ENCODE measurements at regions of chr14 and their contacts with region 1.

Region 1: DNA sequence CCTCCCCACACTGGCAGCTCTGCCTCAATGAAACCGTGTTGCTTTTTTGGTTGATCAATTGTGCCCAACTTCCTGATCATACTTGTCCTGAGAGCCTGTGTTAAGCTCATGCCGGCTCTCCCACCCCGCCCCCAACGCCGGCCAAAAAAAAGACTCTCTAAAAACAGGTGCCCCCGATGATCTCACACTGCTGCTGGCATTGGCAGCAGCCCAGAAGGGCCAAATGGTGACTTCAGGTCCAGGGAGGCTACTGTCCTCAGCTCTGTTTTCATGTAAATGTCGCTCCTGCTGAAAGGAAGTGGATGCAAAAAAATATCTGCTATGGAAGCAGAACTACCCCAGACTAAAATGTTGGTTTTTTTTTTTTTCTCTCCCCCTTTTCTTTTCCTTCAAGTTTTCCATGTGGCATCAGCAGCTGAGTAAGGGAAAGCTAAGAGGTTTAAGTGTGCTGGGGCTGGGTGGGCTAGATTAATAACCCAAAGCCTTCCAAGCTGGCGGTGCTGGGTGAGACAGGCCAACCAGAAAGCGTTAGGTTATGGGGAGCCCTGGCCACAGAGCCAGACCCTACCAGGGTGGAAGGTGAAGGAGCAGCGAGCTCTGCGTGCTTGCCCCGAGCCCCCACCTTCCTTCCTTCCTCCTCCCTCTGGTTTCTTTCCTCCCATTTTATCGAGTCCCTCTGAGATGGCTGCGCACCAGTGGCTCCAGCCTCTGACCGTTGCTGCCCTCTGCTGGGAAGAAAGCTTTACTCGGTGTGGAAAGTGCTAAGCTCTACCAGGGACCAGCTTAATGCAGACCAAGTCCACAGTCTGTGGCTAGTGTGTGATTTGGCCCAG is 396.1 kb downstream of the NRXN3 start:
- DNase-seq: peak; percentile 69 to 95 (median 88)

Region 2: DNA sequence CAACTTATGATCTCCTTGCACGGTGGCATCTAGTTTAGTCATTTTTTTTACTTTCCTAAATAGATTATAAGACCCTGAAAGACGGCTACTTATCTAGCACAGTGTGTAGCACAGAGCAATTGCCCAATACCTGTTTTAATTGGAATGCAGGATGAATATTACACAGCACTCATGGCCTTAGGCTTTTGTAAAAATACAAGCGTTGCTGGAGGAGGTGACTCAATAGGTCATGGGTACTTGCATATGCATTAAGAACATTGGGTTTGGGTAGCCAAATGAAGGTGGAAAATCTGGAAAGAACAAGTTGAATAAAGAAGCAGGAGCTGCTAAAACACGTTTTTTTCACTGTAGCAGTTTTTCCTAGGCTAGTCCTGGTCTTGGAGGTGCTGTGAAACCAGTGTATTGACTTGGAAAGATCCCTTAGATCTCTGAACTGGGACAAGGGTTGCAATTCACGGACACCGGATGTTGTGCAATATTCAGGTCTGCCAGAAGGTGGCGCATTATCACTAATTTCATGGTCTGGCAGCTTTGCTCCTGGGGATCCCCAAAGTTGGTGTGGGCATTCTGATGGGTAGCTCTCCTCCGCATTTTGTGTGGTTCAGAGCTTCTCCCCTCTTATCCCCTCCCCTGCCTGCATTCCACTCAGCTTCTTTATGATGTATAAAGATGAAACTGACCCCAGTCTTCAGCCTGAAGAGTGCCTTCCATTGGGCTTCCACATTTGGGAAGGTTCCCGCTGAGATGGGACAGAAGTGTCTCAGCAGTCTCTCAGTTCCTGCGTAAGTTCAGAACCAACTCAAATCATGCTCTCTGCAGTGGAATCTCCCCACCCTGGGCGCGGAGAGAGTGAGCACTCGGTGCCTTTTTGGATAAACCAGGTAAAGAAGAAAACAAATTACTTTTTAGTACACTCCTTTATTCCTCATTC is 117.8 kb before region 1 on chr14:
- intact Hi-C with region 1: loop called (anchors 5 kb)
- DNase-seq: peak; percentile 27 to 92 (median 79)

Region 3: GRCh38 chr14:78805570-78805969 is 239.3 kb after region 1 on chr14:
- intact Hi-C with region 1: no loop called
- DNase-seq: peak in 12 of 42 donors; percentile 6 to 47 (median 20)

Measured in head of caudate nucleus (tissue), 42 donors.